Left cardiac atrium (tissue), 4 donors: ENCODE measurements at regions of chr5 and their contacts with region 1.

Region 1: DNA sequence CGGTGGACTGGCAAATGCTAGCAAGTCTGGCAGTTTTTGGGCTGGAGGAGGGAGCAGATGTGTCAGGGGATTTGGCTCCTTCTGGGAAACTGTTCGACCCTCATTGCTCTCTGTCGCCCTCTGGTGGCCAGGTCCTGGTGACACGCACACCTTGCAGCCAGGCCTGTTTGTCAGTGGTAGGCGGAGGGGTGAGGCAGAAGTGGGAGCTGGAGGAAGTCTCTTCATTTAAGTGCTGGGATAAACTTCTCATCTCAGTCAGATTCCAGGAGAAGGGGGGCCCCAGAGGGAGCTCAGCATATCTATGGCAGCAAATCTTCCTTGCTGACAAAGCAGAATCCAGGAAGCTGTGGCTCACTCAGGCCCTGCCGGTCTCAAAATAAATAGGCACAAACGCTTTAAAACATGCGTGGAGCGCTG is 326.5 kb downstream of the ZSWIM6 start:
- DNase-seq: peak; percentile 85
- ATAC-seq: peak; percentile 89 to 92

Region 2: GRCh38 chr5:61055434-61056006 is 603.1 kb before region 1 on chr5:
- intact Hi-C with region 1: loop called in 1 of 2 experiments (anchors 10 kb)
- DNase-seq: no peak
- ATAC-seq: peak; percentile 22 to 41

Region 3: DNA sequence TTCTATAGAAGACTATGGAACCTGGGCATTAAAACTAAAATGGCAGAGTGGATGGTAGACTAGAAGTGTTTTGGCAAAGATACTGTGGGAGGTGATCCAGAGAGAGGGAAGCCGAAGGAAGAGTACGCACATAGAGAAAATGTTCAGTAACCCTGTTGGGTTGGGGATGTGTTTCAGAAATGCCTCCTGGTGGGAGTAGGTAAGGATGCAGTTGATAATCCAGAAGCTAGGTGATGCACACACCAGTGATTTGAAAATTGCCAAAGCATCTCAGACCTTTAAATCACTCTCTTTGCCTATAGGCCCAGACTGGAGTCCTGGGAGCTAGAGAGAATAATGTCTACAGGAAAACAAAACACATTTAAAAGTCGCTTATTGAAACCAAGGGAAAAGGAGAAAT is 149.3 kb before region 1 on chr5:
- intact Hi-C with region 1: no loop called
- DNase-seq: no peak
- ATAC-seq: no peak